AG04450 (cell line): ENCODE measurements at regions of chr21 and their contacts with region 1.

Region 1: GRCh38 chr21:45439161-45439872 is 34.4 kb downstream of the COL18A1 start:
- DNase-seq: peak; percentile 60
- H3K4me3 ChIP-seq: 0 out of 2 replicates have a peak overlapping the region, but pooled peaks have one; percentile 20
- H3K27ac ChIP-seq: peak overlapping the region; percentile 3
- H3K27me3 ChIP-seq: no peaks in the 10 kb centered on the region
- CTCF ChIP-seq: peak; percentile 95

Region 2: GRCh38 chr21:44592446-44593311 is 846.6 kb before region 1 on chr21 and contains the start of gene KRTAP10-6:
- CTCF ChIA-PET with region 1: no interaction called
- POLR2A ChIA-PET with region 1: no interaction called
- DNase-seq: no peak
- H3K4me3 ChIP-seq: no peak within 1 kb of the TSS
- H3K27ac ChIP-seq: no peak within 1 kb of the TSS
- H3K27me3 ChIP-seq: peaks cover 14% of the 10 kb centered on the region
- CTCF ChIP-seq: no peak
- polyA plus RNA-seq, gene KRTAP10-6: not detected in 2 replicates

Region 3: DNA sequence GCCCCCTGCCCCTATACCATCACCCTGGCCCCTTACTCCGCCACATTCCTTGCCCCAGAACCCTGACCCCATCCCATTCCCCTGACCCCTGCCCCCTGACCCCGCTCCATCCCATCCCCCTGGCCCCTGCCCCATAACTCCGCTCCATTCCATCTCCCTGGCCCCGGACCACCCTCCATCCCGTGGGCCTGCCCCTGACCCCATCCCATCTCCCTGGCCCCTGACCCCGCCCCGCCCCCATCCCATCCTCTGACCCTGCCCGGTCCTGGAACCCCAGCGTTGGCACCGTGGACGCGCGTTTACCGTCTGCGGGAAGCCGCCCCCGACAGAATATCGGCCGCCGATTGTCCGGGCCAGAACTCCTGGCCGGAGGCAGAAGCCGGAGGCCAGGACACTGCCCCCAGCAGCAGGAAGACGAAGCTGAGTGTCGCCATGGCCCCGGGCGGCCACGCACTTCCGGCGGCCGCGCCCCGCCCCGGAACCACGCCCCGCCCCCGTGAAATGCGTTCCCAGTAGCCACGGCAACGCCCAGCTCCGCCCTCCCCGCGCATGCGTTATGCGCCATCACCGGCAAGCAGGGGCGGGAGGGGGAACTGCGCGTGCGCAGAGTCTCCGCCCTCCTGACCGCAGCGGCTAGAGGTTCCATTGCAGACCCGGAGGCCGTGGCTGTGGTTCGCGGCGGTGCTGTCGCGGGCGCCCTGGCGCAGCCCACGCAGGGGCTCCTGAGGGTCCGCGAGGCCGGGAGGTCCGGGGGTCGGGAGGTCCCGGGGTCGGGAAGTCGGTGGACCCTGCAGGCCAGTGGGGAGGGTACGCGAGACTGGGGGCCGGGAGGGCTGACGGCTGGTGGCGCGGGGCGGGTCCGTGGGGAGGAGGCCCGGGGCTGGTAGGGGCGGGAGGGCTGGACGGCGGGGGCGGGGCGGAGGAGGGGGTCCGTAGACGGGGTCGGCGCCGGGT is 151.6 kb before region 1 on chr21 and contains the start of gene POFUT2:
- CTCF ChIA-PET with region 1: interaction called, 13 read pairs
- POLR2A ChIA-PET with region 1: interaction called, 6 read pairs
- DNase-seq: peak; percentile 87
- H3K4me3 ChIP-seq: peak within 1 kb of the TSS; percentile 77
- H3K27ac ChIP-seq: no peak within 1 kb of the TSS
- H3K27me3 ChIP-seq: no peaks in the 10 kb centered on the region
- CTCF ChIP-seq: no peak
- polyA plus RNA-seq, gene POFUT2: 34.2 and 35.5 TPM in 2 replicates

Region 4: DNA sequence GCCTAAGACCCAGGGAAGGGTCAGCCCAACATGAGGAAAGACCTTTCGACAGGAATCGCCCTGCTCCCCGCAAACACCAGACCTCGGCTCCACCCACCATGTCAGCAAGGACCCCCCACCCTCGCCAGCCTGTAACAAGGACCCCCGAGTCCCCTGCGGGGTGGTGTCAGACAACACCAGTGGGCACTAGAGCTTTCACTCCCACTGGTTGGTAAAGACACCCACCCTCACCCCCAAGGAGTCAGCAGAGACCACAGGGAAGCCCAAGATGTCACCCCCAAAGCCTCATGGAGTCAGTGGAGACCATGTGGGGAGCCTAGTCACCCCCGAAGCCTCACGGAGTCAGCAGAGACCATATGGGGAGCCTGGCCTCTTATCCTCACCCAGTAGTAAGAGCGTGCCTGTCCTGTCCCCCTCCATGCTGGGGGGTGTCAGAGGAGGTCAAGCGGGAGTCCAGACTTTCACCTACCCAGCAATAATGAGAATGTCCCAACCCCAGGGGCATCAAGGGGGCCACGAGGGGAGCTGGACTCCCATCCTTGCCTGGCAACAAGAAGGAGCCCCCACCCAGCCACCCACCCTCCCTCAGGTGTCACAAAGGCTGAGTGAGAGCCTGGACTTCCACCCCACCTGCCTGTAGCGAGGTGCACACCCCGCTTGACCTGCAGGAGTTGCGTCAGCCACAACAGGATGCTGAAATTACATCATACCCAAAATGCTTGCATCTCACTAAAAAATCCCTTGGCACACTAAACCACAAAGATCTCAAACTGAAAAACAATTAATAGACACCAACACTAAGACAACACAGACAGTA is 78.1 kb after region 1 on chr21:
- CTCF ChIA-PET with region 1: no interaction called
- POLR2A ChIA-PET with region 1: no interaction called
- DNase-seq: no peak
- H3K4me3 ChIP-seq: no peak overlapping the region
- H3K27ac ChIP-seq: no peak overlapping the region
- H3K27me3 ChIP-seq: no peaks in the 10 kb centered on the region
- CTCF ChIP-seq: no peak

Region 5: DNA sequence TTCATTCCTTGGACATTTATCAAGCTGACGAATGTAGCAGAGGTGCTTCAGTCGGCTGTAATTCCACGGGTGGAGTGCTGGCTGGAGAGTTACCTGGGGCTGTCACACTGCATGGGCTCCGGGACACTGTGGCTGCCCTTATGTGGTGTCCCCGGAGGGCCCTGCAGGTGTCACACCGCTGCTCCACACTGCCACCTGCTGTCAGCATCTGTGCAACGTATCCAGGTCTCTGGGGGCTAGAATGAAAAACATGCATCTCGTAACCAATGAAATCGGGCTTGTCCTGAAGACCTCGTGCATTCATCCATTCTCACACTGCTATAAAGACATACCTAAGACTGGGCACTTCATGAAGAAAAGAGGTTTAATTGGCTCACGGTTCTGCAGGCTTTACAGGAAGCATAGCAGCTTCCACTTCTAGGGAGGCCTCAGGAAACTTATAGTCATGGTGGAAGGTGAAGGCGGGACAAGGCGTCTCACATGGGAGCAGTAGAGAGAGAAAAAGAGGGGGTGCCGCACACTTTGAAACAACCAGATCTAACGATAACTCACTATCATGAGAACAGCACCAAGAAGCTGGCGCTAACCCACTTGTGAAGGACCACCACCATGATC is 157.5 kb after region 1 on chr21:
- CTCF ChIA-PET with region 1: no interaction called
- POLR2A ChIA-PET with region 1: no interaction called
- DNase-seq: no peak
- H3K4me3 ChIP-seq: no peak overlapping the region
- H3K27ac ChIP-seq: no peak overlapping the region
- H3K27me3 ChIP-seq: peaks cover 24% of the 10 kb centered on the region
- CTCF ChIP-seq: peak; percentile 88